ENCODE measurements at regions of chr11 and their contacts with region 1.

Region 1: DNA sequence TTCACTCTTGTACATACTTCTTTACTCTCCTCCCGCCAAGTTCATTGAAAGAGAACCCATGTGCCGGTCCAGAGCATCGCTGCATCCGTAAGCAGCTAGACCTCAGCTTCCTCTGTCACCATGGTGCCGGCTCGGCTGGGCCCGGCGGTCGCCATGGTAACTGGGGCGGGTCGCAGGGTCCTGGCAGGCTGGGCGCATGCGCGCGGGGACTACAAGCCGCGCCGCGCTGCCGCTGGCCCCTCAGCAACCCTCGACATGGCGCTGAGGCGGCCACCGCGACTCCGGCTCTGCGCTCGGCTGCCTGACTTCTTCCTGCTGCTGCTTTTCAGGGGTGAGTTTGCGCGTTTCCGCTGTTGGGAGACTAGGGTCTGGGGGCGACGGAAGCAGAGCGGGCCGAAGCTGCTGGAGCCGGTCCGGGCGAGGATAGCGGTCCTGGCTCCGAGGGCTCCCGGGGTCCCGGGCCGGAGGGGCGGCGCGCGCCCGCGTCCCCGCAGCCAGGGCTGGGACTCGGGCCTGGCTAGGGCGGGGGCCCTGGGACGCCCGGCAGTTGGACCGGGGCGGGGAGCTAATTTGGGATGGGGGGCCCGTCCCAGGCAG is at the start of gene JAM3:
- DNase-seq: peak; percentile 87
- H3K4me3 ChIP-seq: peak within 1 kb of the TSS; percentile 53 to 72 (median 58)
- H3K27ac ChIP-seq: peak within 1 kb of the TSS; percentile 82 to 93 (median 85)
- H3K4me1 ChIP-seq: peaks cover 0 to 3% (median 0%) of the 10 kb centered on the region in 4 donors
- H3K27me3 ChIP-seq: peaks cover 42% of the 10 kb centered on the region
- CTCF ChIP-seq: no peak
- EP300 ChIP-seq: no peak
- POLR2A ChIP-seq: peak; percentile 62
- total RNA-seq, gene JAM3: 7.8 to 56.9 (median 13.8) TPM

Region 2: DNA sequence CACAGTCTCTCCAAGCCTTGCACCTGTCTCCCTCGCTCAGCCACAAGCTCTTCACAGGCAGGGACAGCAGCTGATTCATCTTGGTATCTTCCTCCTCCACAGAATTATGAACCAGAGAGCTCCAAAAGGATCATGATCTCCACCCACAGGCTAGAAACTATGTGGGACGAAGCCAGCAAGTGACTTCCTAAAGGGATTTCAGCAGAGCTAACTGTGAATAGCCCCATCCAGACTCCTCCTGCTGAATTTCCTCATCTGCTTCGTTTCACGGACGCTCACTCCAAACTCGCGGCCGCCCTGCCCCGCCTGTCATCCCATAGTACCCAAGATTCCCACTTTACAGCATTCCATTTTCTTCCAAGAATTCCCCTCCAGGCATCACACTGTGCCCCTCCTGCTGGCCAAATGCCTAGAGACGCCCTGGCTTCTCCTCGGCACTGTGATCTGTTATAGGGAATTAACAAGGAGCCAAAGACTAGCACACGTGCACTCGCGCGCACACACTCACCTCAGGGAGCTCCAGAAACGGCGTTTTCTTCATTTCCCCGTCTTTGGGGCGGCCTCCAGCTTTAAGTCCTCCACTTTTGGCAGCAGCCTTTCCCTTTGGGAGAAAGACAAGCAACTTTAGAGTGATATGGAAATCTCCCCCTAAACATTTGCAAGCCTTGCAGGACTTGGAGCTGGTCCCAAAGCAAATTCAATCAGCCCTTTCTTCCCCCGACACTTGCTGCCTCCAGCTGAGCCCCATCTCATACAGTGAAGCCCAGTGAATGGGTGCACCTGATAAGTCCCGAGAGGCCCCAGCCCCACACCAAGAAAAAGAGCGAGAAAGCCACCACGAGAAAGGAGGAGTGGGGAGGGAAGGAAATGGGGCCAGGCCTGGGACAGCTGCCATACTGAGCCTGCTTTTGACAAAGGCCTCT is 259.1 kb before region 1 on chr11:
- in situ Hi-C with region 1: no loop called
- intact Hi-C with region 1: no loop called
- DNase-seq: no peak
- H3K4me3 ChIP-seq: no peak overlapping the region
- H3K27ac ChIP-seq: no peak overlapping the region
- H3K4me1 ChIP-seq: peaks cover 0 to 8% (median 0%) of the 10 kb centered on the region in 4 donors
- H3K27me3 ChIP-seq: no peaks in the 10 kb centered on the region
- CTCF ChIP-seq: no peak
- EP300 ChIP-seq: no peak
- POLR2A ChIP-seq: no peak

Region 3: GRCh38 chr11:134124660-134125451 is 55.9 kb after region 1 on chr11:
- in situ Hi-C with region 1: no loop called
- intact Hi-C with region 1: loop called (anchors 5 kb)
- DNase-seq: no peak
- H3K4me3 ChIP-seq: peak overlapping the region; percentile 16 to 33 (median 20)
- H3K27ac ChIP-seq: peak overlapping the region; percentile 61 to 77 (median 64)
- H3K4me1 ChIP-seq: peaks cover 4 to 23% (median 17%) of the 10 kb centered on the region in 4 donors
- H3K27me3 ChIP-seq: peaks cover 39% of the 10 kb centered on the region
- CTCF ChIP-seq: no peak
- EP300 ChIP-seq: no peak
- POLR2A ChIP-seq: no peak

Region 4: GRCh38 chr11:134360050-134360835 is 291.3 kb after region 1 on chr11:
- in situ Hi-C with region 1: no loop called
- intact Hi-C with region 1: loop called (anchors 5 kb)
- DNase-seq: peak; percentile 84
- H3K4me3 ChIP-seq: no peak overlapping the region
- H3K27ac ChIP-seq: no peak overlapping the region
- H3K4me1 ChIP-seq: peaks cover 0 to 7% (median 3%) of the 10 kb centered on the region in 4 donors
- H3K27me3 ChIP-seq: no peaks in the 10 kb centered on the region
- CTCF ChIP-seq: peak; percentile 75 to 89 (median 88)
- EP300 ChIP-seq: no peak
- POLR2A ChIP-seq: no peak